ENCODE measurements at regions of chr6 and their contacts with region 1.

Region 1: DNA sequence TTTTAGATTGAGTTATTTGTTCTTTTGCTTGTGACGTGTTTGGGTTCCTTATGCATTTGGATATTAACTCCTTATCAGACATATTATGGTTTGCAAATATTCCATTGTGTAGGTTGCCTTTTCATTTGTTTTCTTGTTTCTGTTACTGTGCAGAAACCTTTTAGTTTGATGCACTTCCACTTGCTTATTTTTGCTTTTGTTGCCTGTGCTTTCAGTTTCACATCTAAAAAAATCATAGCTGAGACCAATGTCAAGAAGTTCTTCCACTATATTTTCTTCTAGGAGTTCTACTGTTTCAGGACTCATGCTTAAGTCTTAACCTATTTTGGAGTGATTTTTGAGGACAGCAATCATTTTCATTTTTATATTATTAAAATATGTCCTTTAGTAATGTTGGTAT is 113.5 kb downstream of the EPM2A start:
- DNase-seq: no peak
- ATAC-seq: no peak
- H3K4me3 ChIP-seq: no peak overlapping the region
- H3K4me3 Mint-ChIP-seq: no peak overlapping the region
- H3K27ac ChIP-seq: no peak overlapping the region
- H3K27ac Mint-ChIP-seq: no peak overlapping the region
- H3K4me1 ChIP-seq: no peaks in the 10 kb centered on the region
- H3K4me1 Mint-ChIP-seq: peaks cover 3% of the 10 kb centered on the region
- H3K27me3 ChIP-seq: no peaks in the 10 kb centered on the region
- H3K27me3 Mint-ChIP-seq: no peaks in the 10 kb centered on the region
- CTCF ChIP-seq: no peak

Region 2: GRCh38 chr6:144931172-144932035 is 690.4 kb before region 1 on chr6:
- CTCF ChIA-PET with region 1: no interaction called
- POLR2A ChIA-PET with region 1: no interaction called
- intact Hi-C with region 1: no loop called
- DNase-seq: peak; percentile 33
- ATAC-seq: no peak
- H3K4me3 ChIP-seq: no peak overlapping the region
- H3K4me3 Mint-ChIP-seq: no peak overlapping the region
- H3K27ac ChIP-seq: no peak overlapping the region
- H3K27ac Mint-ChIP-seq: no peak overlapping the region
- H3K4me1 ChIP-seq: no peaks in the 10 kb centered on the region
- H3K4me1 Mint-ChIP-seq: no peaks in the 10 kb centered on the region
- H3K27me3 ChIP-seq: no peaks in the 10 kb centered on the region
- H3K27me3 Mint-ChIP-seq: peaks cover 9% of the 10 kb centered on the region
- CTCF ChIP-seq: peak; percentile 62

Region 3: GRCh38 chr6:145498425-145498824 is 123.4 kb before region 1 on chr6:
- CTCF ChIA-PET with region 1: no interaction called
- POLR2A ChIA-PET with region 1: no interaction called
- intact Hi-C with region 1: no loop called
- DNase-seq: no peak
- ATAC-seq: no peak
- H3K4me3 ChIP-seq: no peak overlapping the region
- H3K4me3 Mint-ChIP-seq: no peak overlapping the region
- H3K27ac ChIP-seq: no peak overlapping the region
- H3K27ac Mint-ChIP-seq: no peak overlapping the region
- H3K4me1 ChIP-seq: no peaks in the 10 kb centered on the region
- H3K4me1 Mint-ChIP-seq: no peaks in the 10 kb centered on the region
- H3K27me3 ChIP-seq: peaks cover 0 to 6% (median 0%) of the 10 kb centered on the region in 4 experiments
- H3K27me3 Mint-ChIP-seq: peaks cover 8% of the 10 kb centered on the region
- CTCF ChIP-seq: no peak

Region 4: GRCh38 chr6:145633981-145634627 is 12.3 kb after region 1 on chr6:
- CTCF ChIA-PET with region 1: interaction called, 20 read pairs
- POLR2A ChIA-PET with region 1: no interaction called
- intact Hi-C with region 1: no loop called
- DNase-seq: peak; percentile 73
- ATAC-seq: peak; percentile 69
- H3K4me3 ChIP-seq: no peak overlapping the region
- H3K4me3 Mint-ChIP-seq: no peak overlapping the region
- H3K27ac ChIP-seq: no peak overlapping the region
- H3K27ac Mint-ChIP-seq: no peak overlapping the region
- H3K4me1 ChIP-seq: peaks cover 0 to 3% of the 10 kb centered on the region in 2 donors
- H3K4me1 Mint-ChIP-seq: peaks cover 8% of the 10 kb centered on the region
- H3K27me3 ChIP-seq: no peaks in the 10 kb centered on the region
- H3K27me3 Mint-ChIP-seq: no peaks in the 10 kb centered on the region
- CTCF ChIP-seq: peak; percentile 98

Measured in B cell (primary cell).